GM12878 (cell line): ENCODE measurements at regions of chr10 and their contacts with region 1.

Region 1: GRCh38 chr10:69914398-69915214 is 112.9 kb downstream of the COL13A1 start:
- DNase-seq: no peak
- ATAC-seq: peak; percentile 97
- H3K4me3 ChIP-seq: no peak overlapping the region
- H3K27ac ChIP-seq: no peak overlapping the region
- H3K4me1 ChIP-seq: no peaks in the 10 kb centered on the region
- H3K27me3 ChIP-seq: peaks cover 0 to 3% of the 10 kb centered on the region in 2 experiments
- CTCF ChIP-seq: peak; percentile 88 to 91 (median 88)
- EP300 ChIP-seq: no peak
- POLR2A ChIP-seq: no peak
- RAD21 ChIP-seq: peak; percentile 61

Region 2: GRCh38 chr10:69515699-69516259 is 398.8 kb before region 1 on chr10:
- CTCF ChIA-PET with region 1: interaction called, 3 read pairs
- POLR2A ChIA-PET with region 1: no interaction called
- RAD21 ChIA-PET with region 1: interaction called, 4 read pairs
- SMC1A ChIA-PET with region 1: interaction called, 4 read pairs
- in situ Hi-C with region 1: no loop called
- intact Hi-C with region 1: loop called (anchors 10 kb)
- DNase-seq: peak; percentile 16
- ATAC-seq: peak; percentile 100
- H3K4me3 ChIP-seq: no peak overlapping the region
- H3K27ac ChIP-seq: no peak overlapping the region
- H3K4me1 ChIP-seq: no peaks in the 10 kb centered on the region
- H3K27me3 ChIP-seq: no peaks in the 10 kb centered on the region; a peak in 1 of 4 replicates
- CTCF ChIP-seq: peak; percentile 92 to 98 (median 93); a peak in 5 of 6 replicates
- EP300 ChIP-seq: no peak
- POLR2A ChIP-seq: no peak
- RAD21 ChIP-seq: peak; percentile 85

Region 3: GRCh38 chr10:69786791-69787190 is 127.8 kb before region 1 on chr10:
- CTCF ChIA-PET with region 1: interaction called, 19 read pairs
- POLR2A ChIA-PET with region 1: interaction called, 5 read pairs
- RAD21 ChIA-PET with region 1: interaction called, 8 read pairs
- SMC1A ChIA-PET with region 1: interaction called, 10 read pairs
- in situ Hi-C with region 1: no loop called
- intact Hi-C with region 1: loop called (anchors 2 kb)
- DNase-seq: no peak
- ATAC-seq: no peak
- H3K4me3 ChIP-seq: no peak overlapping the region
- H3K27ac ChIP-seq: no peak overlapping the region
- H3K4me1 ChIP-seq: no peaks in the 10 kb centered on the region
- H3K27me3 ChIP-seq: peaks cover 0 to 1% of the 10 kb centered on the region in 2 experiments; a peak in 2 of 4 replicates
- CTCF ChIP-seq: peak in 2 of 3 experiments; percentile 9 to 16; a peak in 2 of 6 replicates
- EP300 ChIP-seq: no peak
- POLR2A ChIP-seq: no peak
- RAD21 ChIP-seq: peak; percentile 19; the same call in 1 of the 2 replicates

Region 4: GRCh38 chr10:69901628-69902505 is 12.7 kb before region 1 on chr10:
- CTCF ChIA-PET with region 1: interaction called, 19 read pairs
- POLR2A ChIA-PET with region 1: no interaction called
- RAD21 ChIA-PET with region 1: no interaction called
- SMC1A ChIA-PET with region 1: interaction called, 4 read pairs
- in situ Hi-C with region 1: no loop called
- intact Hi-C with region 1: no loop called
- DNase-seq: no peak
- ATAC-seq: peak; percentile 75
- H3K4me3 ChIP-seq: no peak overlapping the region
- H3K27ac ChIP-seq: no peak overlapping the region
- H3K4me1 ChIP-seq: no peaks in the 10 kb centered on the region
- H3K27me3 ChIP-seq: peaks cover 0 to 1% of the 10 kb centered on the region in 2 experiments; a peak in 2 of 4 replicates
- CTCF ChIP-seq: peak; percentile 26 to 45 (median 38); a peak in 5 of 6 replicates
- EP300 ChIP-seq: no peak
- POLR2A ChIP-seq: no peak
- RAD21 ChIP-seq: no peak

Region 5: DNA sequence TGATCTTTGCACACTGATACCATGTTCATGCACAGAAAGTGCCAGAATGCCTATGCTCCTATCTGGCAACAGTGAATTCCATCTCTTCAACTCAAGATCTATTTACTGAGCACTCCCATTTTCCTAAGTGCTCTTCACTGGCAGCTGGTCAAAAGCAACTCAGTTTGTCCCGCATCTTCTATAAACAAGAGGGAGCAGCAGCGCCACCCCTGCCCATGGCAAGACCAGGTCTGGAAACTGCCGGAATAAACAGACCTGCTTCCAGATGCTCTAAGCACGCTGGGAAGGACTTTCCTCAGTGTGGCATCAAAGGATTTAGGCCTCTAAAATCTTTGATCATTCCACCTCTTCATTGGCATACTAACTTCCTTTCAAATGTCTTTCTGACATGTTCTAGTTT is 33.7 kb after region 1 on chr10:
- CTCF ChIA-PET with region 1: interaction called, 10 read pairs
- POLR2A ChIA-PET with region 1: no interaction called
- RAD21 ChIA-PET with region 1: no interaction called
- SMC1A ChIA-PET with region 1: no interaction called
- in situ Hi-C with region 1: no loop called
- intact Hi-C with region 1: no loop called
- DNase-seq: no peak
- ATAC-seq: no peak
- H3K4me3 ChIP-seq: no peak overlapping the region
- H3K27ac ChIP-seq: no peak overlapping the region
- H3K4me1 ChIP-seq: peaks cover 2% of the 10 kb centered on the region
- H3K27me3 ChIP-seq: no peaks in the 10 kb centered on the region
- CTCF ChIP-seq: no peak
- EP300 ChIP-seq: no peak
- POLR2A ChIP-seq: no peak
- RAD21 ChIP-seq: no peak